HEK293T (cell line): ENCODE measurements at regions of chr11 and their contacts with region 1.

Region 1: DNA sequence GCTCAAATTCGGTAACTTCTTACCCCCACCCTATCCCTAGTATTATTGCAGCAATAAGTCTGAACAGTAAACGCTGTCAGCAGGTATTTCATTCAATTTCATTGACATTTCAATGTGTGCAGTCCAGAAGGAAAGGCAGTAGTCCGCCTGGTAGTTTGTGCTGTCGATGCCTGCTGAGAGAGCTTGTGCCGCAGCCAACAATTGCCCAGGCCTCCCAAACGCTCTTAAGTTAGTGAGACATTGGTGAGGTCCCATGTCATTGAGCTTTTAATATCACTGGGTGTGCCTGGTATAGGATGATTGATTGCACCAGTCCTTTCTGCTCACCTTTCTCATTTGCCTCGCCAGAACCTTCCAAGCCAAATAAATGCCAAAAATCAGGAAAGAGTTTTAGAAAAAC is 28.1 kb downstream of the ALKBH3 start:
- DNase-seq: no peak

Region 2: DNA sequence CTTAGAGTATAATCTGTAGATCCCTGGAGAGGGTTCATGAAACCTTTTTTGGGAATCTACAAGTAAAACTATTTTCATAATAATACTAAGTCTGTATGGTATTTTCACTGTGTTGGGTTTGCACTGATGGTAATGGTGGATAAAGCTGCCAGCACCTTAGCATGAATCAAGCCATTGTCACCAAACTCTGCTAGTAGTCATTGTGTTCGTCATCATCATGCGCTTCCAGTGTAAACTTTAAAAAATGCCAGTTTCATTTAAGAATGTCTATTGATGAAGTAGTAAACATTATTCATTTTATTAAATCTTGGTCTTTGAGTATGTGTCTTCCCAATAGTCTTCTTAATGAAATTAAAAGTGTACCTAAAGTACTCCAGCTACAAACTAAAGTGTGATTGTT is 13.1 kb before region 1 on chr11:
- CTCF ChIA-PET with region 1: interaction called, 10 read pairs
- POLR2A ChIA-PET with region 1: no interaction called
- DNase-seq: no peak